HEK293 (cell line): ENCODE measurements at regions of chr1 and their contacts with region 1.

Region 1: DNA sequence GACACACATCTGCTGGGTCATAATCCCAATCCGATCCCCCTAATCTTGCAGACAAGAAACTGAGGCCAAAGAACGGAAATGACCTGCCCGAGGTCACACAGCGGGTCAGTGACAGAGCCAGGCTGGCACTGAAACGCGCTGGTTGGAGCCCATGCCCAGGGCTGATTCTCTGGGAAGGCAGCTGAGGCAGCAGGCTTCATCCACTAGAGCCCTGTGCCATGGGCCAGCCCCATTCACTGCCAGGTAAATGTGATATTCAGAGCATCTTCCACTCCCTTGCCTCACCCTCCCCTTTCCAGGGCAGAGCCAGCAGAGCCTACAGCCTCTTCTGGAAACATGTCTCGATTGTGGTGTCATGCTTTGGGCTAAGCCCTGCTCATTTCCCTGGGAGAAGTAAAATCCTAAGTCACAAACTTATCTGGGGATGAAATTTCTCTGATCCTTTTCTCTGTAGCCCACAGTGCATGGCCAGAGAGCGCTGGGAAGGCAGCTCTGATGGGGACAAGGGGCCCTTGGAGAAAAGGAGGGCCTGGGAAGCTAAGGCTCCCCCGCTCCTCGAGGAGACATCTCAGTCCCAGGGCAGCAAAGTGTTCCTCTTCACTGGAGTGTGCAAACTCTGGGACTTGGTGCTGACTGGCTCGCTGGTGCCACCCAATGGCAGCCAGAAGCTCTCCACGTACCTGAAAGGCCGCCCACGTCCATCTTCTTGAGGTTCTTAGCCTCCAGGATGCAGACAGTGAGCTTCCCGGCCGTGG is 110.4 kb downstream of the SYT2 start:
- H3K4me3 ChIP-seq: no peak overlapping the region
- H3K27ac ChIP-seq: no peak overlapping the region
- H3K4me1 ChIP-seq: no peaks in the 10 kb centered on the region
- CTCF ChIP-seq: peak; percentile 82

Region 2: GRCh38 chr1:202376247-202376646 is 223.6 kb before region 1 on chr1:
- CTCF ChIA-PET with region 1: no interaction called
- POLR2A ChIA-PET with region 1: no interaction called
- H3K4me3 ChIP-seq: no peak overlapping the region
- H3K27ac ChIP-seq: no peak overlapping the region
- H3K4me1 ChIP-seq: 0 out of 2 replicates have a peak, but pooled peaks cover 4% of the 10 kb centered on the region
- CTCF ChIP-seq: no peak

Region 3: GRCh38 chr1:202462342-202463076 is 137.3 kb before region 1 on chr1:
- CTCF ChIA-PET with region 1: interaction called, 13 read pairs
- POLR2A ChIA-PET with region 1: no interaction called
- H3K4me3 ChIP-seq: no peak overlapping the region
- H3K27ac ChIP-seq: no peak overlapping the region
- H3K4me1 ChIP-seq: peaks cover 12% of the 10 kb centered on the region
- CTCF ChIP-seq: no peak

Region 4: DNA sequence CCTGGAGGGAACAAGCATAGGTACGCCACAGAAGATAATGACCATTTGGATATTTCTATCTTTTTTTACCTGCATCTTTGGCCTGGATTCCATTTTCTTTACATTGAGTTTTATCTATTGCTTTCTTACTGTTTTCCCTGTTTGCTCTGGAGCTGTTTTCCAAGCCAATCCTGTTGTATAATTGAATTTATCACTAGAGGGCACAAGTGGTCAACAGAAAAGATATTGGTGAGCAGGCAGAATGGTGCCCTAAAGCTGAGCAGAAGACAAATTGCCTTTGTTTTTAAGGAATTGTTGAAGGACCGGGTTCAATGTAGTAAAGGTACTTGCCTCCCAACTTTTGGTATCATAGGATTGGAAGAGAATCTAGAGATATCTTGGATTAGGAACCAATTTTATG is 98.6 kb before region 1 on chr1:
- CTCF ChIA-PET with region 1: interaction called, 18 read pairs
- POLR2A ChIA-PET with region 1: no interaction called
- H3K4me3 ChIP-seq: no peak overlapping the region
- H3K27ac ChIP-seq: no peak overlapping the region
- H3K4me1 ChIP-seq: peaks cover 4% of the 10 kb centered on the region
- CTCF ChIP-seq: peak; percentile 50; the same call in 1 of the 2 replicates

Region 5: GRCh38 chr1:202589190-202590030 is 10.4 kb before region 1 on chr1:
- CTCF ChIA-PET with region 1: interaction called, 10 read pairs
- POLR2A ChIA-PET with region 1: no interaction called
- H3K4me3 ChIP-seq: no peak overlapping the region
- H3K27ac ChIP-seq: no peak overlapping the region
- H3K4me1 ChIP-seq: peaks cover 5% of the 10 kb centered on the region; the same call in 1 of the 2 replicates
- CTCF ChIP-seq: no peak